HepG2 (cell line): ENCODE measurements at regions of chr12 and their contacts with region 1.

Region 1: GRCh38 chr12:102939670-102940222 is 17.7 kb upstream of the ASCL1 start:
- DNase-seq: peak; percentile 62
- ATAC-seq: peak; percentile 98
- H3K4me3 ChIP-seq: no peak overlapping the region
- H3K27ac ChIP-seq: no peak overlapping the region
- H3K4me1 ChIP-seq: peaks cover 21% of the 10 kb centered on the region
- H3K27me3 ChIP-seq: no peaks in the 10 kb centered on the region
- CTCF ChIP-seq: peak; percentile 88
- EP300 ChIP-seq: no peak
- POLR2A ChIP-seq: no peak
- RAD21 ChIP-seq: peak; percentile 93

Region 2: DNA sequence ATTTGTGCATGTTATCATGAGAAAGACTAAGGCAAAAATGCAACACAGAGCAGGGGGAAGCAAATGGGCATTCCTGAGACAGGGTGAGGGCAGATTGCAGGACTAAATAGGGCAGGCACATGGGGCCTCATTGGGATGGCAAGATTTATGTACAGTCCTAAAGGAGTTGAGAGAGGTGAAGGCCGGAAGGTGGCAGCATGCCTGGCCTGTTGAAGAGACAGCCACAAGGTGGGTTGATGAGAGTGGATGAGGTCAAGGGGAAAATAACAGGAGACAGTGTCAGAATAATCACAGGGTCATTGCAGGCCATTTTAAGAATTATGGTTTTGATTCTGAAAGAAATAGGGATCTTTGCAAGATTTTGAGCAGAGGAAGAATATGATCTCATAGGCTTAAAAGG is 43.7 kb before region 1 on chr12:
- CTCF ChIA-PET with region 1: no interaction called
- POLR2A ChIA-PET with region 1: interaction called, 18 read pairs
- in situ Hi-C with region 1: no loop called
- intact Hi-C with region 1: no loop called
- DNase-seq: no peak
- ATAC-seq: no peak
- H3K4me3 ChIP-seq: no peak overlapping the region
- H3K27ac ChIP-seq: peak overlapping the region; percentile 44
- H3K4me1 ChIP-seq: peaks cover 63% of the 10 kb centered on the region
- H3K27me3 ChIP-seq: no peaks in the 10 kb centered on the region
- CTCF ChIP-seq: peak; percentile 31
- EP300 ChIP-seq: no peak
- POLR2A ChIP-seq: no peak
- RAD21 ChIP-seq: no peak

Region 3: DNA sequence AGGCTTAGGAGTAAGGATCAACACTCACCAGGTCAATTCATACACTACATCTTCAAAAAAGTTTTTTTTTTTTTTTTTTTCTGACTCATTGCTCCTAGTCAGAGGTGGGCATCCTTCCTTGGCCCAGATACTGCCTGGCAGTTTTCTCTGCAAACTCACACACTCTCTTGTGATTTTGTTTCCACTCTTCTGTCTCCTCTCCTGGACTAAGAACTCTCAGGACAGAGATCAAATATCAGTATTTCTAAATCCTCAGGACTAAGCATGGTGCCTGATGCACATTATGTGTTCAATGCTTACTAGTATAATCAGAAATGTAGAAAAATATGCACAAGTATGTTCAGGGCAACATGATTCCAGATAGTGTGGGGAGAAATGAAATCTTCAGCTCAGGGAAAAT is 12.5 kb before region 1 on chr12:
- CTCF ChIA-PET with region 1: no interaction called
- POLR2A ChIA-PET with region 1: no interaction called
- in situ Hi-C with region 1: no loop called
- intact Hi-C with region 1: no loop called
- DNase-seq: no peak
- ATAC-seq: no peak
- H3K4me3 ChIP-seq: no peak overlapping the region
- H3K27ac ChIP-seq: no peak overlapping the region
- H3K4me1 ChIP-seq: peaks cover 22% of the 10 kb centered on the region
- H3K27me3 ChIP-seq: no peaks in the 10 kb centered on the region
- CTCF ChIP-seq: no peak
- EP300 ChIP-seq: no peak
- POLR2A ChIP-seq: no peak
- RAD21 ChIP-seq: no peak